PC-3 (cell line): ENCODE measurements at regions of chr16 and their contacts with region 1.

Region 1: DNA sequence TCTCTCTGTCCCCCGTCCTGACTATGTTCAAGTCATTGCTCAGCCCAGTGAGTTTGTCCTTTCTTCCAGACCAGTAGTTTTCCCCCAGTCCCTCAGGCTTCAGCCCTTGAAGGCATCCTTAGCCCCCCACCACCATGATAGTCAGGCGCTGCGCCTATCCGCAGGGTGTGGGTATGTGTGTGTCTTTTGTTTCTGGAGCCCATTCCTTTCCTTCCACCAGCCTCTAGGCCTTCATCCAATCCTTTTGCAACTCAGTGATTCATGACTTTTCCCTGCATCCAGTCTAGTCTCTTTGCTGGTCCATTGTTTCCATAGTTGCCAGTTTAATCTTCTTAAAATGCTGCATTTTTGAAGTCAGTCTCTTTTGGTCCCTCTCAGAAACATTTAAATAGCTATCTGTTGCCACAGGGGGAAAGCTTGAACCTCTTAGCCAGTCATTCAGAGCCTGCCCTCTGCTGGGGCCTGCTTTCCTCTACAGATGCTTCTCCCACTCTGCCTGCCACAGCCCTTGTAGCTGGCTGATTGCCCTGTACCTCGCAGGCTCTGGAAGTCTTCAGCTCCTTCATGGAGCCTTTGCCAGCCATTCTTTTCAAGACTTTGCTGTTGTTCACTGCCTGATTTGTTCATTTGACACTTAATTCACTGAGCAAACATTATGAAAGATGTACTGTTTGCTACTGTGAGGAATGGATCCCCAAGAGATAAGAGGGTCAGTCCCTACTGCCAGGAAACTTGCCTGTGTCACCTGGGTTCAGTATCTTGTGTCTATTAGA is 55.9 kb upstream of the ADCY7 start:
- DNase-seq: peak; percentile 58
- ATAC-seq: peak; percentile 59
- H3K4me3 ChIP-seq: no peak overlapping the region
- H3K27ac ChIP-seq: no peak overlapping the region
- H3K4me1 ChIP-seq: peaks cover 17% of the 10 kb centered on the region
- H3K27me3 ChIP-seq: no peaks in the 10 kb centered on the region
- CTCF ChIP-seq: peak; percentile 65

Region 2: DNA sequence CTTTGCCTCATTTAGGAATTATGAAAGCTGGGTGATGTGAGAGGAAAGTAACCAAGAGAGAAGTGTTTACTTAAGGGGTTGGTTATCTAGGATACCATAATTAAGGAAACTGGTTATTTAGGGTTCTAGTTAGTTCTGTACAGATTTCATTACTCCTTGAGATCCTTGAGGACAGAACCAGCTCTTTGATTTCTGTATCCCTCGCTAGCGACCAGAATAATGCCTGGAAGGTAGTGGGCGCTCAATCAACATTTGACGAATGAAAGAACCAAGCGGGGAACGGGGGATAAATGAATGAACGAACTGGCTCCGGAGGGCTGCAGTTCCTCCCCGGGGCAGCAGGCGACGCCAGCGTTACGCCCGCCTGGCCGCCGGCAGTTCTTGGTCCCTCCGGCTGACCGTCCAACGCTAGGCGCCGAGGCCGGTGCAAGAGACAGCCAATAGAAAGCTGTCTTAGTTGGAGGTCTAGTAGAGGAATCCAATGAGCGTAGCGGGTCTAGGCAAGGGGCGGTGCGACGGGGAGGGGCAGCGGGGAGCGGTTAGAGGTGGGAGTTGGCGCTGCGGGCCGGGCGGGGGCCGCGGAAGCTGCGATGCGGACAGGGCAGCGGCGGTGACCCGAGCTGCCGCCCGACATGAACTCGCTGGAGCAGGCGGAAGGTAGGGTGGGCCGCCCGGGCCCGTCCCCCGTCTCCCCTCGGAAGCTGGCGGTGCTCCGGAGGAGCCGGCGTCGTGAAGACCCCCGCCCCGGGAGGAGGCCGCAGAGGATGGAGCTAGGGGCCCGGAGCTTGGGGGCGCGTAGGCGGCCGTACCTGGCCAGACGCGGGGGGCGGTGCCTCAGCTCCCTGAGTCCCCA is 185.5 kb before region 1 on chr16 and contains the start of gene CNEP1R1:
- CTCF ChIA-PET with region 1: interaction called, 16 read pairs
- POLR2A ChIA-PET with region 1: no interaction called
- intact Hi-C with region 1: loop called (anchors 1 kb)
- DNase-seq: peak; percentile 93
- ATAC-seq: peak; percentile 93
- H3K4me3 ChIP-seq: peak within 1 kb of the TSS; percentile 95
- H3K27ac ChIP-seq: no peak within 1 kb of the TSS
- H3K4me1 ChIP-seq: peaks cover 6% of the 10 kb centered on the region
- H3K27me3 ChIP-seq: 0 out of 2 replicates have a peak, but pooled peaks cover 4% of the 10 kb centered on the region
- CTCF ChIP-seq: peak; percentile 91
- total RNA-seq, gene CNEP1R1: 7.0 and 10.5 TPM in 2 replicates

Region 3: GRCh38 chr16:50065624-50066481 is 144.6 kb before region 1 on chr16 and contains the start of gene HEATR3:
- CTCF ChIA-PET with region 1: interaction called, 8 read pairs
- POLR2A ChIA-PET with region 1: no interaction called
- intact Hi-C with region 1: loop called (anchors 2 kb)
- DNase-seq: peak; percentile 87
- ATAC-seq: peak; percentile 92
- H3K4me3 ChIP-seq: peak within 1 kb of the TSS; percentile 85
- H3K27ac ChIP-seq: peak within 1 kb of the TSS; percentile 80
- H3K4me1 ChIP-seq: peaks cover 9% of the 10 kb centered on the region
- H3K27me3 ChIP-seq: no peaks in the 10 kb centered on the region
- CTCF ChIP-seq: no peak
- total RNA-seq, gene HEATR3: 18.7 and 19.0 TPM in 2 replicates

Region 4: GRCh38 chr16:50326949-50327402 is 116.5 kb after region 1 on chr16:
- CTCF ChIA-PET with region 1: no interaction called
- POLR2A ChIA-PET with region 1: no interaction called
- intact Hi-C with region 1: loop called (anchors 10 kb)
- DNase-seq: peak; percentile 58
- ATAC-seq: peak; percentile 68; the same call in 1 of the 2 replicates
- H3K4me3 ChIP-seq: no peak overlapping the region
- H3K27ac ChIP-seq: no peak overlapping the region
- H3K4me1 ChIP-seq: no peaks in the 10 kb centered on the region
- H3K27me3 ChIP-seq: no peaks in the 10 kb centered on the region
- CTCF ChIP-seq: peak; percentile 67

Region 5: DNA sequence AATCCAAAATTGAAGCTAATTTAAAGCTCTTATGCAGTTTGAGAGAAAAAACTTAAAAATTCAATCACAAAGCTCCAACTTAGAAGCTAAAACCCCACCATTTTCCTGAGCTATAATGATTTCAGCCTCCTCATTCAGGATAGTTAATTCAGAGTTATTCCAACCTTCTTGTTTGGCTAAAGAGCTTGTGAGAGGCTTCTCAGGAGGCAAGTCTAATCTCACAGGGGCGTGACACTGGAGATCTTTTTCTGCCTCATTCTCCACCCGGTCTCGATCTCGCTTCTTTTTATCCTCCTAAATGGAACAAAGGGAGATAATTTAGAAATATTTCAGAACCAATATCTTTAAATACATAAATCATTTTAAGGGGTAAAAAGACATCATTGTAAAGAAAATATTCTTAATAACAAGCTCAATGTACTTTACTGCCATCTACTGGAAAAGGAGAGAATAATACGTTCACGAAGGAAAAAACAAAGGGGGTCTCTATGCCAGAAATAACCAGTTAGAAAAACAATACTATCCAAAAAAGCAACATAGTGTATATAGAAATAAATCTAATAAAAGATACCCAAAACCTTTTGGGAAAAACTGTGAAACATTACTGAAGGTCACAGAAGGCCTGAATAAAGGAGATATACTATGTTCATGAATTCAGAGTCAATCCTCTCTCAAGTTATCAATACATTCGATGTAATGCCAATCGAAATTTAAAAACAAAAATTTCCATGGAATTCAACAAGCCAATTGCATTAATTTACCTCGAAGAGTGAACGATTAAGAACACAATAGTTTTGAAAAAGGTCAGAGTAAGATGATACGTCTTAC is 144.4 kb after region 1 on chr16:
- CTCF ChIA-PET with region 1: interaction called, 3 read pairs
- POLR2A ChIA-PET with region 1: no interaction called
- intact Hi-C with region 1: loop called (anchors 5 kb)
- DNase-seq: peak; percentile 16
- ATAC-seq: no peak
- H3K4me3 ChIP-seq: no peak overlapping the region
- H3K27ac ChIP-seq: no peak overlapping the region
- H3K4me1 ChIP-seq: no peaks in the 10 kb centered on the region
- H3K27me3 ChIP-seq: no peaks in the 10 kb centered on the region
- CTCF ChIP-seq: peak; percentile 57